ENCODE measurements at regions of chr2 and their contacts with region 1.

Region 1: DNA sequence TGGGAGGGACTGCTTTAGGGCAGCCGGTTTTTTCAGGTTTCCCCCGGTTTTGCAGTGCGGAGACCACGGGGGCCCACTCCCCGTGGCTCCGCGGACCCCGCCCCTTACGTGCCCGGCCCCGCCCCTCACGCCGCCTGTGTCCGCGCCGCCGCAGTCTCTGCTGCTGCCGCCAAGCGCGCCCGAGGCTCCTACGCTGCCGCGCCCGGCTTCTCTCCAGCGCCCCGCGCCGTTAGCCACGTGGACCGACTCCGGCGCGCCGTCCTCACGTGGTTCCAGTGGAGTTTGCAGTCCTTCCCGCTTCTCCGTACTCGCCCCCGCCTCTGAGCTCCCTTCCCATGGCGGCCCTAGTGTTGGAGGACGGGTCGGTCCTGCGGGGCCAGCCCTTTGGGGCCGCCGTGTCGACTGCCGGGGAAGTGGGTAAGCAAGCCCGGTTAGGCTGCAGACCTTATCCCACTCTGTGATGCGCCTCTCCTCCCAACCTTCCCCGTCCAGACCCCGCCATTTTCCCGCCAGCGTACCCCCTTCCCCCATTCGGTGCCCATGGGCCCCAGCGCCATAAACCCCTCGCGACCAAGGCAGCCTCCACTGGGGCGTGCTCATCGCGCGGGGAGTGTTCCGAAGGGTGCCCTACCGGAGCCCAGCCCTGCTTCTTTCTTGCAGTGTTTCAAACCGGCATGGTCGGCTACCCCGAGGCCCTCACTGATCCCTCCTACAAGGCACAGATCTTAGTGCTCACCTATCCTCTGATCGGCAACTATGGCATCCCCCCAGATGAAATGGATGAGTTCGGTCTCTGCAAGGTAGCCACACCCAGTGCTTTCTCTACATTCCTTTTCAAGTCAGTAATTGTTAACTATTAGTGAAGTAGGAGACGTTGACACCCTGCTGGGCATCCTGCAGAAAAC is at the start of gene CAD:
- DNase-seq: peak; percentile 85
- H3K4me3 Mint-ChIP-seq: peak within 1 kb of the TSS; percentile 98
- H3K27ac Mint-ChIP-seq: peak within 1 kb of the TSS; percentile 94
- H3K4me1 Mint-ChIP-seq: peaks cover 58% of the 10 kb centered on the region
- H3K27me3 Mint-ChIP-seq: no peaks in the 10 kb centered on the region
- total RNA-seq, gene CAD: 135 and 138 TPM in 2 replicates

Region 2: GRCh38 chr2:26970244-26970920 is 247.1 kb before region 1 on chr2 and contains the start of gene MAPRE3:
- intact Hi-C with region 1: loop called (anchors 2 kb)
- DNase-seq: peak; percentile 78
- H3K4me3 Mint-ChIP-seq: peak within 1 kb of the TSS; percentile 84
- H3K27ac Mint-ChIP-seq: peak within 1 kb of the TSS; percentile 71
- H3K4me1 Mint-ChIP-seq: peaks cover 17% of the 10 kb centered on the region
- H3K27me3 Mint-ChIP-seq: peaks cover 49% of the 10 kb centered on the region
- total RNA-seq, gene MAPRE3: 3.1 and 3.7 TPM in 2 replicates

Region 3: GRCh38 chr2:27095745-27096651 is 121.5 kb before region 1 on chr2:
- intact Hi-C with region 1: loop called (anchors 1 kb)
- DNase-seq: peak; percentile 32
- H3K4me3 Mint-ChIP-seq: peak overlapping the region; percentile 37
- H3K27ac Mint-ChIP-seq: no peak overlapping the region
- H3K4me1 Mint-ChIP-seq: peaks cover 16% of the 10 kb centered on the region
- H3K27me3 Mint-ChIP-seq: no peaks in the 10 kb centered on the region

Region 4: DNA sequence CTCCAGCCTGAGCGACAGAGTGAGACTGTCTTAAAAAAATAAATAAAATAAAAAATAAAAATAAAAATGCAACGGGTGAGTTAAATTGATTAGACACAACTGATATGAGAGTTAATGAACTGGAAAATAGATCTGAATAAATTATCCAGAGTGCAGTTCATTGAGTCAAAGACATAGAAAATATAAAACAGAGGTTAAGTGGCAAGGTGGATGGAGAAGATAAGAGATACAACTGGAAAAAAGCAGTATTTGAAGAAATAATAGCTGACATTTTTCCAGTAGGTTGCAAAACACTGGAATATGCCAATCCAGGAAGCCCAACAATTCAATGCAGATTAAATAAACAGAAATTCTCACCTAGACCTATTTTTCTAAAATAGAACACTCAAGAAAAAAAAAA is 109.2 kb before region 1 on chr2:
- intact Hi-C with region 1: no loop called
- DNase-seq: no peak
- H3K4me3 Mint-ChIP-seq: no peak overlapping the region
- H3K27ac Mint-ChIP-seq: no peak overlapping the region
- H3K4me1 Mint-ChIP-seq: no peaks in the 10 kb centered on the region
- H3K27me3 Mint-ChIP-seq: peaks cover 9% of the 10 kb centered on the region

Region 5: GRCh38 chr2:27170581-27171333 is 46.7 kb before region 1 on chr2:
- intact Hi-C with region 1: loop called (anchors 2 kb)
- DNase-seq: no peak
- H3K4me3 Mint-ChIP-seq: no peak overlapping the region
- H3K27ac Mint-ChIP-seq: no peak overlapping the region
- H3K4me1 Mint-ChIP-seq: no peaks in the 10 kb centered on the region
- H3K27me3 Mint-ChIP-seq: peaks cover 28% of the 10 kb centered on the region

Region 6: DNA sequence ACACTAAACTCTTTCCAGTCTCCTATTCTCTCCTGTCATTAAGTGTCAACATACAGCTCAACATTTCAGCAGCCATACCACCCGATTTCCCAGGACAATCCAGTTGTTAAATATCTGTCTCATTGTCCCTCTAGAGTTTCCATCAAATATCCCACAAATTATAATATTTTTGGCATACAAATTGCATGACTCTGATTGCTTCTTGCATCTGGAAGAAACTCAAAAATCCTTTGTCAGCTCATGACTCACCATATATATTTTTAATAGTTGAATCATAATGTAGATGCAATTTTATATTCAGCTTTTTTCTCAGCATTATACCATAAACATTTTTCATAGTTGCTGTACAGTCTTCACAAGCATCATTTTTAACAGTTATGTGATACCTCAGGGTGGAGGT is 38.2 kb after region 1 on chr2:
- intact Hi-C with region 1: no loop called
- DNase-seq: no peak
- H3K4me3 Mint-ChIP-seq: no peak overlapping the region
- H3K27ac Mint-ChIP-seq: no peak overlapping the region
- H3K4me1 Mint-ChIP-seq: no peaks in the 10 kb centered on the region
- H3K27me3 Mint-ChIP-seq: peaks cover 24% of the 10 kb centered on the region

Region 7: DNA sequence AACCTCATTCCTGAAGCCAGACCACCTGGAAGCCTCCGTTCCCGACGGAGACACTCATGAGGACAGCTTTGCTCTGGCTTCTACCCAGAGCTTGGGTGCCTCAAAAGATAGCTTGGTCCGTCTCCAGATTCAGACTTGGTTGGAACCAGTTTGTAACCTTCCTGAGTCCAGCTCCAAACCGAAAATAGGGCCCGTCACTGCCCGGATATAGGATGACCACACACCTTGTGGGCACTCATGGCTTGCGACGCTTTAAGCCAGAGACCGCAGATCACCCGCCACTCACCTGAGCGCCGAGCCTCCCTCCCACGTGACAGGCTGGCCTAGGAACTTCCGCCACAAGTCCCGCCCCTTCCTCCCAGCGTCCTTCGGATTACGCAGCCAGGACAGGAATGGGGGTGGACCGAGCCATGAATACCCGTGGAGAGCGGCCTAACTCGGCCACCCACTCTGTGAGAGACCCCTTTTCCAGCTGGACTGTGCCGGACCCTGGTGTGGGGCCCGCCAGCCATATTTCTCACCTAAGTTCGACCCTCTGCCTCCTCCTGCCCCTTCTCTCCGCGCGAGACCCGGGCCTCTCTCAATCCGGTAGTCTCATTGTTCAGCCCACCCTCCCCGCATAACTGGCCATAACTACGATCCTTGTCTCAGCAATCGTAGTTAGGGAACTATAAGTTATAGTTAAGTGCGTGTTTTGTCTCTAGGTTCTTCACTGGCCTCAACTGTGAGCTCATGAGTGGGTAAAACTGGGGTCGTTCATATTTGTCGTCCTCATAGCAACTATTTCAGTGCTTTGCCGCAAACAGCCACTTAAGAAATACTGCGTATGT is 105.5 kb after region 1 on chr2 and contains the start of gene MPV17:
- intact Hi-C with region 1: loop called (anchors 1 kb)
- DNase-seq: peak; percentile 84
- H3K4me3 Mint-ChIP-seq: peak within 1 kb of the TSS; percentile 99
- H3K27ac Mint-ChIP-seq: peak within 1 kb of the TSS; percentile 88
- H3K4me1 Mint-ChIP-seq: peaks cover 32% of the 10 kb centered on the region
- H3K27me3 Mint-ChIP-seq: no peaks in the 10 kb centered on the region
- total RNA-seq, gene MPV17: 85.9 and 89.9 TPM in 2 replicates

Region 8: GRCh38 chr2:27441958-27442919 is 224.8 kb after region 1 on chr2 and contains the start of gene KRTCAP3:
- intact Hi-C with region 1: no loop called
- DNase-seq: no peak
- H3K4me3 Mint-ChIP-seq: no peak within 1 kb of the TSS
- H3K27ac Mint-ChIP-seq: no peak within 1 kb of the TSS
- H3K4me1 Mint-ChIP-seq: peaks cover 8% of the 10 kb centered on the region
- H3K27me3 Mint-ChIP-seq: no peaks in the 10 kb centered on the region
- total RNA-seq, gene KRTCAP3: 3.5 and 5.7 TPM in 2 replicates

Region 9: DNA sequence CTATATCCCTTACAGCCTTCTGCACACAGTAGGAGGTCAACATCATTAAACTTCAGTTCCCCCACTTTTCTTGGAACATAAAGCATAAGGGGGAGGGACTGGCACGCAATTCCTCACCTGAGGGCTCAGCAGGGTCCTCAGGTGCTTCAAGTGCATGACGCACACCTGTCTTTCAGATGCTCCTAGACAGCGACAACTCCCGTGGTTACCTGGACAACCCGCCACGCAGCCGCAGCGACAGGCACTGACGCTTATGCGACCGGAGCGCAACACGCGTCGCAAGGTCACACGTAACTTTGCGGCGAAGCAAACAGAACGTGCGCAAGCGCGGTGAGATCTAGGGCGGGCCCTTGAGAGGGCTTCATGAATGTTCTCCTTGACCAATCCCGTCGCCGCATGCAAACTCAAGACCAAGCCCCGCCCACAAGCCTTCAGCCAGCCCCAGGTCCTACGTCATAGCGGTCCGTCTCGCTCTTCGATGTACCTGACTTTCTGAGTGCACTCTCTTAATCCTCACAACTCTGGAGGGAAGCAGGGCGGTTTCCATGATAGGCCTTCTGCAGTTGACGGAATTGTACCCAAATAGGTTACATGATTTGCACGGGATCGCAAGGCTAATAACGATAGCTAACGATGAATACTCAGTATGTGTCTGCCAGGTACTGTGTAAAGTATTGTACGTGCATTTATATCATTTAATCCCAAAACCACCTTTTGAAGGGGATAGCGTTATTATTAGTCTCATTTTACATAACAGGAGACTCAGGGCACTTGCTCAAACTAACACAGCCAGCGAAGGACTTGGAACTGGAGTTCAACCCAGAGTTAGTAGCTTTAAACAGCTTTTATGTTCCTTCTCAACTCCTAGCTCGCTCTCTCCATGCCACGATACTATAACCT is 272.3 kb after region 1 on chr2 and contains the start of gene IFT172:
- intact Hi-C with region 1: loop called (anchors 5 kb)
- DNase-seq: peak; percentile 98
- H3K4me3 Mint-ChIP-seq: peak within 1 kb of the TSS; percentile 91
- H3K27ac Mint-ChIP-seq: peak within 1 kb of the TSS; percentile 91
- H3K4me1 Mint-ChIP-seq: peaks cover 22% of the 10 kb centered on the region
- H3K27me3 Mint-ChIP-seq: peaks cover 13% of the 10 kb centered on the region
- total RNA-seq, gene IFT172: 13.4 and 13.5 TPM in 2 replicates

Measured in activated T-helper 1 cell treated with anti-CD3 and anti-CD28 coated beads, Interleukin-12 subunit alpha, Interleukin-12 subunit beta, Interleukin-2, Interleukin-4 antibody, amounts not matched to agents 30 ng/mL and 10 ng/mL and 1 ng/mL, durations not matched to agents 14 hours and 24 hours and 36 hours (primary cell).